Activated CD4-positive, alpha-beta memory T cell treated with anti-CD3 and anti-CD28 coated beads for 36 hours (primary cell): ENCODE measurements at regions of chr7 and their contacts with region 1.

Region 1: GRCh38 chr7:158863611-158864506 is 7.5 kb downstream of the DYNC2I1 start:
- DNase-seq: peak; percentile 69
- H3K4me3 Mint-ChIP-seq: peak overlapping the region; percentile 77
- H3K27ac Mint-ChIP-seq: peak overlapping the region; percentile 78
- H3K4me1 Mint-ChIP-seq: peaks cover 32% of the 10 kb centered on the region
- H3K27me3 Mint-ChIP-seq: no peaks in the 10 kb centered on the region

Region 2: GRCh38 chr7:158672975-158673374 is 190.9 kb before region 1 on chr7:
- CTCF ChIA-PET with region 1: no interaction called
- POLR2A ChIA-PET with region 1: no interaction called
- intact Hi-C with region 1: no loop called
- DNase-seq: no peak
- H3K4me3 Mint-ChIP-seq: no peak overlapping the region
- H3K27ac Mint-ChIP-seq: no peak overlapping the region
- H3K4me1 Mint-ChIP-seq: peaks cover 6% of the 10 kb centered on the region
- H3K27me3 Mint-ChIP-seq: no peaks in the 10 kb centered on the region

Region 3: GRCh38 chr7:158704704-158705468 is 159.0 kb before region 1 on chr7 and contains the start of gene NCAPG2:
- CTCF ChIA-PET with region 1: interaction called, 3 read pairs
- POLR2A ChIA-PET with region 1: interaction called, 11 read pairs
- intact Hi-C with region 1: no loop called
- DNase-seq: peak; percentile 98
- H3K4me3 Mint-ChIP-seq: peak within 1 kb of the TSS; percentile 84
- H3K27ac Mint-ChIP-seq: peak within 1 kb of the TSS; percentile 82
- H3K4me1 Mint-ChIP-seq: peaks cover 40% of the 10 kb centered on the region
- H3K27me3 Mint-ChIP-seq: no peaks in the 10 kb centered on the region
- total RNA-seq, gene NCAPG2: 145 to 149 TPM

Region 4: DNA sequence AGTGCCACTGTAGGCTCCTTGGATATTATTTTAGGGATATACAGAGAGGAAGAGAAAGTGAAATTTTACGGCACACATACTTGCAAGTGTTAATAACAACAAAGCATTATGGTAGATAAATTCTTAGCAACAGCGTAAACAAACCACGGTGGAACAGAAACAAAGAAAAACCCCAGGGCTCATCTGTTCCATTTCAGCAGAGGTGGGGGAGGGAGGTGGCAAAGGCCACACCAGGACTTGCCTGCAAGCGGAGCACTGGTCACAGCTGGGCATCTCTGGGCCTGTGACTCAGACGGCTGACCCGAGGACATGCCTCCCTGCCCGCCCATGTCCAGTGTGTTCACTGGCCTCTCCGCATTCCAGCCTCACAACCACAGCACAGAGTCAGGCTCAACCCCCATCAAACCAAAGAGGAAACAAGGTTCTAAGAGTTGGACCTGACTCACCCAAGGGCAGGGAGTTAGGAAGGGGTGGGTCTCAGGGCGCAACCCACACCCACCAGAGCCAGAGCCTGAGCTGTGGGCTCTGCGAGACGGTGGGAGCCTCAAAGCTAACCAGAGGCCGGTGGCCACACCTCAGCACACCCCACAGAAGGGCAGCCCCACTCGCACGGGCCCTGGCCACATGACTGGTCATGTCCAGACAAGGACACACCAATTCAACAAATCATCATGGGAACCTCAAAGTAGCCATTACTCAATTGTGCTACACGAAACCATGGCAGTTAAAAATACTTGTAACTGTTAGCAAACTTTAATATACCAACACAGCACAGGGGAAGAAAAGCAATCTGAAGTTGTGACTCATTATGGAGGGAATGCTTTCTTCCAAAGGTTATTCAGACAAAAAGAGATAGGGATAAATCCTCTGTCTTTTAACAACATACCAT is 45.3 kb before region 1 on chr7:
- CTCF ChIA-PET with region 1: no interaction called
- POLR2A ChIA-PET with region 1: interaction called, 10 read pairs
- intact Hi-C with region 1: no loop called
- DNase-seq: peak; percentile 85
- H3K4me3 Mint-ChIP-seq: peak overlapping the region; percentile 78
- H3K27ac Mint-ChIP-seq: peak overlapping the region; percentile 95
- H3K4me1 Mint-ChIP-seq: peaks cover 85% of the 10 kb centered on the region
- H3K27me3 Mint-ChIP-seq: no peaks in the 10 kb centered on the region

Region 5: DNA sequence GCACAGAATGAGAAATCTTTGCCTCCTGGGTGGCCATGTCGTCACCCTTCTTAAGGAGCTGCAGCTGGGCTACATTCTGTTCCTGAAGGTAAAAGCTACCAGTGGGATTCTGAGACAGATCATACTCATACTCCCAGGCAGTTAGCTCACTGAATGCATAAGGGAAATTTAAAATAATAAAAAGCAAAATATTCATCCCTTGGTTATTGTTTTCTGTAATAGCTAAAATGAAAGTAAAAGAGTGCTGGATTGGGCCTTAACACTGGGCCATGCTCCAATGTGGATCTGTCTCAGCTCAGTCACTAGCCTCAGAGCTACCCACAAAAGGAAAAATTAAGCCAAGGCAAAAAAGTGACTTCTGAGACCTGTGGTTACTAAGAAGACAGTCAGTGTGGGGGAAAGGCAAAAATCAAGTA is 16.4 kb before region 1 on chr7:
- CTCF ChIA-PET with region 1: interaction called, 3 read pairs
- POLR2A ChIA-PET with region 1: interaction called, 11 read pairs
- intact Hi-C with region 1: loop called (anchors 2 kb)
- DNase-seq: peak; percentile 29
- H3K4me3 Mint-ChIP-seq: peak overlapping the region; percentile 63
- H3K27ac Mint-ChIP-seq: peak overlapping the region; percentile 82
- H3K4me1 Mint-ChIP-seq: peaks cover 33% of the 10 kb centered on the region
- H3K27me3 Mint-ChIP-seq: no peaks in the 10 kb centered on the region

Region 6: DNA sequence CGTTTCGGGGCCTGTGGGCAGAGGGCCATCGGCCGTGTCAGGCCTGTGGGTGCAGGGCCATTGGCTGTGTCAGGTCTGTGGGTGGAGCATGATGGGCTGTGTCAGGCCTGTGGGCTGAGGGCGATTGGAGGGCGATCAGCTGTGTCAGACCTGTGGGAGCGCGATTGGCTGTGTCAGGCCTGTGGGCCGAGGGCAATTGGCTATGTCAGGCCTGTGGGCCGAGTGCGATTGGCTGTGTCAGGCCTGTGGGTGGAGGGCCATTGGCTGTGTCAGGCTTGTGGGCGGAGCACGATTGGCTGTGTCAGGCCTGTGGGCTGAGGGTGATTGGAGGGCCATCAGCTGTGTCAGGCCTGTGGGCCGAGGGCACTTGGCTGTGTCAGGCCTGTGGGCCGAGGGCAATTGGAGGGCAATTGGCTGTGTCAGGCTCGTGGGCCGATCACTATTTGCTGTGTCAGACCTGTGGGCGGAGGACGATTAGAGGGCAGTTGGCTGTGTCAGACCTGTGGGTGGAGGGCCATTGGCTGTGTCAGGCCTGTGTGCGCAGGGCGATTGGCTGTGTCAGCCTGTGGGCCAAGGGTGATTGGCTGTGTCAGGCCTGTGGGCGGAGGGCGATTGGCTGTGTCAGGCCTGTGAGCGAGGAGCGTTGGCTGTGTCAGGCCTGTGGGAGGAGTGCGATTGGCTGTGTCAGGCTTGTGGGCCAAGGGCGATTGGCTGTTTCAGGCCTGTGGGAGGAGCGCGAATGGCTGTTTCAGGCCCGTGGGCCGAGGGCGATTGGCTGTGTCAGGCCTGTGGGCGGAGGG is 46.6 kb after region 1 on chr7:
- CTCF ChIA-PET with region 1: no interaction called
- POLR2A ChIA-PET with region 1: no interaction called
- intact Hi-C with region 1: no loop called
- DNase-seq: no peak
- H3K4me3 Mint-ChIP-seq: no peak overlapping the region
- H3K27ac Mint-ChIP-seq: no peak overlapping the region
- H3K4me1 Mint-ChIP-seq: no peaks in the 10 kb centered on the region
- H3K27me3 Mint-ChIP-seq: no peaks in the 10 kb centered on the region

Region 7: GRCh38 chr7:159197066-159197975 is 333.5 kb after region 1 on chr7:
- CTCF ChIA-PET with region 1: no interaction called
- POLR2A ChIA-PET with region 1: no interaction called
- intact Hi-C with region 1: loop called (anchors 5 kb)
- DNase-seq: peak; percentile 74
- H3K4me3 Mint-ChIP-seq: peak overlapping the region; percentile 70
- H3K27ac Mint-ChIP-seq: peak overlapping the region; percentile 98
- H3K4me1 Mint-ChIP-seq: peaks cover 38% of the 10 kb centered on the region
- H3K27me3 Mint-ChIP-seq: no peaks in the 10 kb centered on the region